Gastrocnemius medialis (tissue), 4 donors: ENCODE measurements at regions of chr5 and their contacts with region 1.

Region 1: GRCh38 chr5:149551200-149552037 is at the start of gene CSNK1A1:
- DNase-seq: peak; percentile 96 to 98
- ATAC-seq: peak; percentile 84 to 86
- H3K4me3 ChIP-seq: peak within 1 kb of the TSS; percentile 85 to 99 (median 96)
- H3K27ac ChIP-seq: peak within 1 kb of the TSS; percentile 99 to 100 (median 99)
- H3K4me1 ChIP-seq: peaks cover 35 to 37% of the 10 kb centered on the region in 2 donors
- H3K27me3 ChIP-seq: no peaks in the 10 kb centered on the region
- CTCF ChIP-seq: peak; percentile 81 to 97 (median 92)
- POLR2A ChIP-seq: peak; percentile 98
- total RNA-seq, gene CSNK1A1: 157 to 252 (median 215) TPM

Region 2: DNA sequence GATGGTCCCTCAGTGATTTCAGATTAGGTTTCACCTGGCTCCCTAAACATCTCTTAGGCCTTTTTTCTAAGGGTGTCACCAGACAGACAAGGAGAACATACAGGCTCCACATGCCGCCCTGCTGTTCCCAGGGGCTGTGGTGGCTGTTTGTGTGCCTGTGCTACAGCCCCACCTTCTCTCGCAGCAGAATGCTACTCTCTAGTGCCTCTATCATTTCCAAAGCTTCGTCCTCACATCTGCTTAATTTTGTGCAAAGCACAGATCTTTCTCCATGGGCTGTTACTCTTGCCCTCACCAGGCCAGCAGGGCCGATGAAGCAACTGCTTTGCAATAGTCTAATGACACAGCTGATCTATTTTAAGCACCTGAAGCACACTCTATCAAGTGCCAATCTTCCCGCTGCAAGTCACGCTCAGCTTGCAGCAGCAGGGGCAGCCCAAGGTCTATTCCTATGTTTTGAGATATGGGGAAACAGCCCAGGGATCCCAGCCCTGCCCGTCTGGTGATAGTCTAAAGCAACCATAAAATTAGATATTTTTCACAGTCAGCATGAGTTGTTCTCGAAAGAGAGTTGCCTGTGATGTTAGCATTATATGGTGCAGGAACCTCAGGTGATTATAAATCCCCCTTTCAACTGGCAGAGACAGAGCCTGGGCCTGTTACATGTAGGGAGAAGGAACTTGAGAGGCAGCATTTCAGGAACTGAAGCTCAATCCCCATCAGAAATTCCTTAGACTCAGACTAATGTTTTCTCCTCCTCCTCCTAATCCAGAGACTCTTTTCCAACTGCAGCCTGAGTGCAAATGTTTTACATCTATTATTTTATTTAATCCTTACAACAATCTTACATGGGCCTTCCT is 397.4 kb before region 1 on chr5:
- in situ Hi-C with region 1: loop called in 1 of 4 experiments (anchors 25 kb)
- intact Hi-C with region 1: loop called (anchors 10 kb)
- DNase-seq: peak; percentile 89 to 95
- ATAC-seq: peak; percentile 96
- H3K4me3 ChIP-seq: no peak overlapping the region
- H3K27ac ChIP-seq: peak overlapping the region; percentile 87 to 97 (median 92)
- H3K4me1 ChIP-seq: peaks cover 61 to 89% of the 10 kb centered on the region in 2 donors
- H3K27me3 ChIP-seq: no peaks in the 10 kb centered on the region
- CTCF ChIP-seq: peak in 1 of 5 experiments; percentile 8
- POLR2A ChIP-seq: peak; percentile 58 to 61

Region 3: GRCh38 chr5:149434162-149435014 is 117.0 kb before region 1 on chr5:
- in situ Hi-C with region 1: loop called in 1 of 4 experiments (anchors 5 kb)
- intact Hi-C with region 1: no loop called
- DNase-seq: peak; percentile 31 to 52
- ATAC-seq: peak; percentile 50 to 64
- H3K4me3 ChIP-seq: no peak overlapping the region
- H3K27ac ChIP-seq: peak overlapping the region in 1 of 4 donors; percentile 27
- H3K4me1 ChIP-seq: peaks cover 0 to 10% of the 10 kb centered on the region in 2 donors
- H3K27me3 ChIP-seq: no peaks in the 10 kb centered on the region
- CTCF ChIP-seq: peak; percentile 63 to 90 (median 78)
- POLR2A ChIP-seq: no peak

Region 4: DNA sequence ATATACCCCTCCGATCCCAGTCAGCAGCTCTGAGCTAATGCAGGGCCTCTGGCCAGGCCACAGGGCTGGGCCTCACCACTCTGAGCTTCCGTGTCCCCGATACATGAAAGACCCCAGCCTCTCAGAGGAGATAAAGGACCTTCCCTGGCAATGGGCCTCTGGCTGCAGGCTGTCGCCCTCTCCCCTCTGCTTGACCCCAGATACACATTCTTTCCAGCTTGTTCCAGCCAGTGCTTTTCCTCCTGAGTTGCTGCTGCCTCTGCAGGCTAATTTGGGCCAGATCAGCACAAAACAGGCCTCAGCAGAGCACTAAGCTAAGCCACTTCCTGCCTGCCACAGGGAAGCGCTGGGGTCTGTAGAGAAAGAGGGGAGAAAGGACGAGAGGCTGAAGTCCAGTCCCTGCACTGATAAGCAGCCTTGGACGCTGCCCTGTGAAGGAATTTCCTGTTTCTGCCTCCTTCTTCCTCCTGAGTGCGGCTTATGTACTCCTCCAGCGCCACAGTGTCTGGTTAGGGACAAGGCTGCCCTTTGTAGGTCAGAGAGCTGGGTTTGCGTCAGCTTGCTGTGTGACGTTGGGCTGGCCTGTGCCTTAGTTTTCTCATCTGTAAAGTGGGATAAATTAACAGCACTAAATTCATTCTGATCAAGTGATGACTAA is 99.3 kb before region 1 on chr5:
- in situ Hi-C with region 1: loop called in 1 of 4 experiments (anchors 5 kb)
- intact Hi-C with region 1: no loop called
- DNase-seq: no peak
- ATAC-seq: no peak
- H3K4me3 ChIP-seq: no peak overlapping the region
- H3K27ac ChIP-seq: peak overlapping the region; percentile 85 to 98 (median 96)
- H3K4me1 ChIP-seq: peaks cover 53 to 82% of the 10 kb centered on the region in 2 donors
- H3K27me3 ChIP-seq: no peaks in the 10 kb centered on the region
- CTCF ChIP-seq: no peak
- POLR2A ChIP-seq: no peak

Region 5: DNA sequence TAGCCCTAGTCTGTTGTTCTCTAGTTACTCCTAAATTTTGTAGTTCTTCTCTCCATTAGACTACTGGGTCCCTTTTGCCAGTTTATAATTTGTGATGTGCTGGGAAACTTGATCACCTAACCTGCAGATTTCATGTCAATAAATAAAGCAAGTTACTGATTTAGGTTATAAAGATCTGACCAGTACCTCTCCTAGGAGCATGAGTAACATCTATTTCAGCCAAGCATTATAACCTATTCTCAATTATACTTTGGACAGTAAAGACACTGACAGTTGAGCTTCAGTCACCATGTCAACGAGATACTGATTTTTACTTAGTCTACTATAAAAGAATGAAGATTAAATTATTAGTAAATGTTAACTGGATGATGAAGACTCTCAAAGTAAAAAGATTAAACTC is 36.9 kb before region 1 on chr5:
- in situ Hi-C with region 1: no loop called
- intact Hi-C with region 1: loop called (anchors 5 kb)
- DNase-seq: no peak
- ATAC-seq: peak in 1 of 2 donors; percentile 14
- H3K4me3 ChIP-seq: no peak overlapping the region
- H3K27ac ChIP-seq: peak overlapping the region; percentile 70 to 82 (median 76)
- H3K4me1 ChIP-seq: peaks cover 60 to 68% of the 10 kb centered on the region in 2 donors
- H3K27me3 ChIP-seq: no peaks in the 10 kb centered on the region
- CTCF ChIP-seq: no peak
- POLR2A ChIP-seq: no peak

Region 6: DNA sequence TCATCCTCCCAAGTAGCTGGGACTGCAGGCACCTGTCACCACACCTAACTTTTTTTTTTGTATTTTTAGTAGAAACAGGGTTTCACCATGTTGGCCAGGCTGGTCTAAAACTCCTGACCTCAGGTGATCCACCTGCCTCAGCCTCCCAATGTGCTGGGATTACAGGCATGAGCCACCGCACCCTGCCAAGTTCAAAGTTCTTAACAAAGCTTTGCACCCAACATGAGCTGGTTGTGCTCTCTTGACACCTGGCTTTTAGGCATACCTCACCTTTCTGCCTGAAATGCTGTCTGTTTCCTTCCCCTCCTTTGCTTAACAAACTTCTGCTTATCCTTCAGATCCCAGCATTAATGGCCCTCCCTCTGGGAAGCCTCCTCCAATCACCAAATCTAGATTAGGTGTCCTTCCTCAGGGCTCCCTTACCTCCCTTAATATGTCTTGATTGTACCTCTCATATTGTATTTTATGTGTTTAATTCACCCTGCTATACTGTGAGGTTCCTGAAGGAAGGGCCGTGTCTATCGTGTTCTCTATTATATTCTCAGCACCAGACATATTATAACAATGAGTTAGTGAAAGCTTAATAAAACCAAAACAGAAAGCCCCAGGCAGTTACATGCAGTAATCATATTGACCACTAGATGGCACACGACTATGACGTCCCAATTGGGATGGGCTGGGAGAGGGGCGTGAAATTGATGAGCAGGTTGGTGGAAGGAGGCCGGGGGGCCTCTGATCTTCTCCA is 115.8 kb after region 1 on chr5:
- in situ Hi-C with region 1: no loop called
- intact Hi-C with region 1: no loop called
- DNase-seq: no peak
- ATAC-seq: peak; percentile 41 to 47
- H3K4me3 ChIP-seq: no peak overlapping the region
- H3K27ac ChIP-seq: peak overlapping the region; percentile 5 to 49 (median 27)
- H3K4me1 ChIP-seq: peaks cover 19 to 29% of the 10 kb centered on the region in 2 donors
- H3K27me3 ChIP-seq: no peaks in the 10 kb centered on the region
- CTCF ChIP-seq: peak; percentile 79 to 88 (median 86)
- POLR2A ChIP-seq: no peak